ENCODE measurements at regions of chr6 and their contacts with region 1.

Region 1: DNA sequence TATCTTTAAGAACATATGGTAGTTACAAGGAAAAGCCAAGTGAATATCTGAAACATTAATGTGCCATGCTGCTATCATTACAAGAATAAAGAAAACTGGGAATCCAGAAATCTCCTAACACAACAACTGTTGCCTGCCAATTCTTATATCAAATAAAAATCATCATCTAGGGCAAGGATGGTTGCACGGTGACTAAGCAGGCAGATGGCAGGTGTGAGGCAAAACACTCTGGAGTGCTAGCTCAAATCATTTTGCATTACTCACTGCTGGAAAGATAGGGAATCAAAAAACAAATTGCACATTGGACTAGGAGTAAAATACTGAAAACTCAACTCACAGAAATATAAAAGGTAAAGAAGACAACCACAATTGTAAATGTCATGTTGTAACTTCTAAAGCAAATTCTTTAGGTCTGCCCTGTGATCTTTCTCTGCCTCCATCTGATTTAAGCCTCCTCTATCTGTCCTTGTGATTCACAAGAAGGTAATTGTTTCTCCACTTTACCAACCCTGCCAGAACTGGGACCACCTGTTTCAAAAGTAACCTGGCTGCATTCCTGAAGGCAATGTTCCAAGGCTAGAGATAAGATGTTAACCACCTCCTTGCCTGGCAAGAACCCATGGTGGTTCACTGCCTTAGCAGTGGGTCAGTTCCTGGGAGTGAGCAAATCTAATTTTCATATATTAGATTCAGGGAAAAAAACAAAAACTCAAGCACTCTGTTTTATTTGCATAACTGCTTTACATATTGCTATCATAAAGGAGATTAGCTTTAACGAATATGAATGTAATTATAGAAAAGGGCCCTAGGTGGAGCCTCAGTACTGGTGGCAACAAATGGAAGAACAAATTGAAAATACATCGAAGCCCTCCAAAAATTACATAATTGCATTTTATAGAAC is 33.1 kb upstream of the LCA5 start:
- DNase-seq: no peak
- H3K4me3 ChIP-seq: peak overlapping the region; percentile 8
- H3K27ac ChIP-seq: no peak overlapping the region
- H3K4me1 ChIP-seq: no peaks in the 10 kb centered on the region
- H3K27me3 ChIP-seq: no peaks in the 10 kb centered on the region
- CTCF ChIP-seq: peak in 2 of 3 donors; percentile 34 to 43
- EP300 ChIP-seq: no peak
- POLR2A ChIP-seq: no peak

Region 2: DNA sequence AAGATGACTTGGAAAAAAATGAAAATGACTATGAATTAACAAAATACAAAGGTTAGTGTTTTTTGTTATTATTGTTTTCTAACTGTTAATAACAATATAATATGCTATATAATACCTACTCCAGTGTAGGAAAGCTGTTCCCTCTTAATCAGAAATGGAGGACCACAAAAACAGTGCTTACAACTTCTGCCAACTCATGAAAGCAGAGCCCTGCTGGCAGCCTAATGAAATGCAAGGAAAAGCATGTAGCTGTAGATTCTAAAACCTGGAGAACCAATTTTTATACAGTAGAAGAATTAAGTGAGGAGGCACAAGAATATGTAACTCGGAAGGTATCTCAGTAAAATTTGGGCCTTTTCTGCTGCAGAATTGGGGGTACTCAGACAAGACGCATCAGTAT is 521.8 kb before region 1 on chr6:
- intact Hi-C with region 1: no loop called
- DNase-seq: no peak
- H3K4me3 ChIP-seq: no peak overlapping the region
- H3K27ac ChIP-seq: no peak overlapping the region
- H3K4me1 ChIP-seq: peaks cover 2% of the 10 kb centered on the region
- H3K27me3 ChIP-seq: no peaks in the 10 kb centered on the region
- CTCF ChIP-seq: no peak
- EP300 ChIP-seq: no peak
- POLR2A ChIP-seq: no peak

Region 3: GRCh38 chr6:79713701-79714322 is 143.4 kb after region 1 on chr6:
- intact Hi-C with region 1: loop called in 1 of 4 experiments (anchors 5 kb)
- DNase-seq: peak in 4 of 5 donors; percentile 16 to 58 (median 34)
- H3K4me3 ChIP-seq: no peak overlapping the region
- H3K27ac ChIP-seq: no peak overlapping the region
- H3K4me1 ChIP-seq: no peaks in the 10 kb centered on the region
- H3K27me3 ChIP-seq: no peaks in the 10 kb centered on the region
- CTCF ChIP-seq: no peak
- EP300 ChIP-seq: no peak
- POLR2A ChIP-seq: no peak

Measured in ovary (tissue), 10 donors.